ENCODE measurements at regions of chr21 and their contacts with region 1.

Region 1: GRCh38 chr21:33127154-33127893 is 57.4 kb downstream of the OLIG1 start:
- DNase-seq: peak; percentile 48
- ATAC-seq: peak; percentile 96
- H3K4me3 ChIP-seq: peak overlapping the region; percentile 44 to 57
- H3K27ac ChIP-seq: no peak overlapping the region
- H3K4me1 ChIP-seq: peaks cover 0 to 5% of the 10 kb centered on the region in 2 experiments; a peak in 1 of 4 replicates
- H3K27me3 ChIP-seq: peaks cover 4% of the 10 kb centered on the region; the same call in 1 of the 2 replicates
- CTCF ChIP-seq: peak; percentile 95 to 98 (median 96)
- POLR2A ChIP-seq: no peak
- RAD21 ChIP-seq: peak; percentile 89

Region 2: GRCh38 chr21:32834916-32835235 is 292.4 kb before region 1 on chr21:
- CTCF ChIA-PET with region 1: interaction called, 4 read pairs
- POLR2A ChIA-PET with region 1: no interaction called
- RAD21 ChIA-PET with region 1: interaction called in 1 of 2 experiments, 3 read pairs
- intact Hi-C with region 1: loop called (anchors 2 kb)
- DNase-seq: no peak
- ATAC-seq: no peak
- H3K4me3 ChIP-seq: no peak overlapping the region
- H3K27ac ChIP-seq: no peak overlapping the region
- H3K4me1 ChIP-seq: no peaks in the 10 kb centered on the region
- H3K27me3 ChIP-seq: peaks cover 7% of the 10 kb centered on the region
- CTCF ChIP-seq: no peak
- POLR2A ChIP-seq: no peak
- RAD21 ChIP-seq: no peak

Region 3: GRCh38 chr21:32940079-32941014 is 187.0 kb before region 1 on chr21:
- CTCF ChIA-PET with region 1: interaction called, 45 read pairs
- POLR2A ChIA-PET with region 1: no interaction called
- RAD21 ChIA-PET with region 1: interaction called, 6 read pairs
- intact Hi-C with region 1: loop called (anchors 1 kb)
- DNase-seq: peak; percentile 40
- ATAC-seq: peak; percentile 93
- H3K4me3 ChIP-seq: no peak overlapping the region
- H3K27ac ChIP-seq: no peak overlapping the region
- H3K4me1 ChIP-seq: 0 out of 4 replicates have a peak, but pooled peaks cover 0 to 6% of the 10 kb centered on the region in 2 experiments
- H3K27me3 ChIP-seq: peaks cover 12% of the 10 kb centered on the region; the same call in 1 of the 2 replicates
- CTCF ChIP-seq: peak; percentile 66 to 92 (median 90); a peak in 5 of 6 replicates
- POLR2A ChIP-seq: no peak
- RAD21 ChIP-seq: peak; percentile 63

Region 4: DNA sequence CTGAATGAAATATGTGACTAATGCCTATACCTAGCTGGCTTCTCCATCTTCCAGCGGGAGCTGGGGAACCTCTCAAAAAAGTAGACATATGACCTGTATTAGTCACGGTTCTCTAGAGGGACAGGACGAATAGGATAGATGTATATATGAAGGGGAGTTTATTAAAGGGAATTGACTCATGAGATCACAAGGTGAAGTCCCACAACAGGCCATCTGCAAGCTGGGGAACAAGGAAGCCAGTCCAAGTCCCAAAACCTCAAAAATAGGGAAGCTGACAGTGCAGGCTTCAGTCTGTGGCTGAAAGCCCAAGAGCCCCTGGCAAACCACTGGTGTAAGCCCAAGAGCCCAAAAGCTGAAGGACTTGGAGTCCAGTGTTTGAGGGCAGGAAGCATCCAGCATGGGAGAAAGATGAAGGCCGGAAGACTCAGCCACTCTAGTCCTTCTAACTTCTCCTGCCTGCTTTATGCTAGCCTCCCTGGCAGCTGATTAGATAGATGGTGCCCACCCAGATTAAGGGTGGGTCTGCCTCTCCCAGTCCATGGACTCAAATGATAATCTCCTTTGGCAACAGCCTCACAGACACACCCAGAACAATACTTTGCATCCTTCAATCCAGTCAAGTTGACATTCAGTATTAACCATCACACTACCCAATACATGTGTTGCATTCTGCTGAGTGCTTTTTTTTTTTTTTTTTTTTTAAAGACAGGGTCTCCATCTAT is 37.8 kb before region 1 on chr21:
- CTCF ChIA-PET with region 1: interaction called, 10 read pairs
- POLR2A ChIA-PET with region 1: no interaction called
- RAD21 ChIA-PET with region 1: no interaction called
- intact Hi-C with region 1: no loop called
- DNase-seq: no peak
- ATAC-seq: no peak
- H3K4me3 ChIP-seq: no peak overlapping the region
- H3K27ac ChIP-seq: no peak overlapping the region
- H3K4me1 ChIP-seq: no peaks in the 10 kb centered on the region
- H3K27me3 ChIP-seq: no peaks in the 10 kb centered on the region
- CTCF ChIP-seq: no peak
- POLR2A ChIP-seq: no peak
- RAD21 ChIP-seq: no peak

Region 5: DNA sequence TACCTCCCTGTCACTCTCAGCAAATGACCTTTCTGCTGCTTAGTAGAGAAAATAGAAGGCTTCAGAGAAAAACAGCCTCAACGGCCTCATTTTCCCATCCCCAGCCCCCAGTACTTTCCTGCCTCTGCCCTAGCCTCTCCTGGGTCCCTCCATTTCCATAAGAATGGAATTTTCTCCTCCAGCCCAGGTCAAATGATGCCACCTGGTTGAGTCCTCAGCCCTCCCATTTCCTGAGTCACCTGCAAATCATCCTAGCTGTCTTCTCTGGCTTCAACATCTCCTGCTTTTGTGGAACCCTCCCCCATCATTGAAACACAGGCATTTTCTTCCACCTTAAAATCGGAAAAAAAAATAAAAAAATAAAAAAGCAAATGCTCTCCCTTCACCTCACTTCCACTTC is 22.2 kb before region 1 on chr21:
- CTCF ChIA-PET with region 1: no interaction called
- POLR2A ChIA-PET with region 1: no interaction called
- RAD21 ChIA-PET with region 1: no interaction called
- intact Hi-C with region 1: no loop called
- DNase-seq: no peak
- ATAC-seq: no peak
- H3K4me3 ChIP-seq: no peak overlapping the region
- H3K27ac ChIP-seq: no peak overlapping the region
- H3K4me1 ChIP-seq: no peaks in the 10 kb centered on the region
- H3K27me3 ChIP-seq: peaks cover 8% of the 10 kb centered on the region; the same call in 1 of the 2 replicates
- CTCF ChIP-seq: no peak
- POLR2A ChIP-seq: no peak
- RAD21 ChIP-seq: no peak

Region 6: DNA sequence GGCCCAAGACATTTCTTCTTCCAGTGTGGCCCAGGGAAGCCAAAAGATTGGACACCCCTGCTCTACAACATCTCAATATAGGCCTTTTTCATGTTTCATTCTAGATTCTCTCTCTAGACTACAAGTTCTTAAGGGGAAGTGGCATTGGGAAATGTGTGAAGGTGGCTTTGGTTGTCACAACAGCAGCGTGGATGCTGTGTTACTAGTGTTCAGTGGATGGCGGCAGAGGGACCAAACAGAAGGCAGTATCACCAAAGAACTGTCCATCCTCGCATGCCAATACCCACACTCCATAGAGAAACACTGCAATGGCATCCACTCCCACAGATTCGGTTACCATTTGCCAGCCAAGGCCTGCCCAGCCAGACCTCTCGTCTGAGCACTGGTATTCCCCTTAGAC is 78.2 kb after region 1 on chr21:
- CTCF ChIA-PET with region 1: no interaction called
- POLR2A ChIA-PET with region 1: no interaction called
- RAD21 ChIA-PET with region 1: no interaction called
- intact Hi-C with region 1: no loop called
- DNase-seq: no peak
- ATAC-seq: no peak
- H3K4me3 ChIP-seq: no peak overlapping the region
- H3K27ac ChIP-seq: no peak overlapping the region
- H3K4me1 ChIP-seq: peaks cover 6 to 24% of the 10 kb centered on the region in 2 experiments
- H3K27me3 ChIP-seq: no peaks in the 10 kb centered on the region
- CTCF ChIP-seq: no peak
- POLR2A ChIP-seq: no peak
- RAD21 ChIP-seq: no peak

Measured in HCT116 (cell line).